Posterior vena cava (tissue), 2 donors: ENCODE measurements at regions of chr2 and their contacts with region 1.

Region 1: GRCh38 chr2:52594026-52594425 is 1173.6 kb upstream of the CHAC2 start:
- DNase-seq: no peak

Region 2: GRCh38 chr2:52512760-52513159 is 81.3 kb before region 1 on chr2:
- intact Hi-C with region 1: loop called in 1 of 2 experiments (anchors 2 kb)
- DNase-seq: no peak

Region 3: DNA sequence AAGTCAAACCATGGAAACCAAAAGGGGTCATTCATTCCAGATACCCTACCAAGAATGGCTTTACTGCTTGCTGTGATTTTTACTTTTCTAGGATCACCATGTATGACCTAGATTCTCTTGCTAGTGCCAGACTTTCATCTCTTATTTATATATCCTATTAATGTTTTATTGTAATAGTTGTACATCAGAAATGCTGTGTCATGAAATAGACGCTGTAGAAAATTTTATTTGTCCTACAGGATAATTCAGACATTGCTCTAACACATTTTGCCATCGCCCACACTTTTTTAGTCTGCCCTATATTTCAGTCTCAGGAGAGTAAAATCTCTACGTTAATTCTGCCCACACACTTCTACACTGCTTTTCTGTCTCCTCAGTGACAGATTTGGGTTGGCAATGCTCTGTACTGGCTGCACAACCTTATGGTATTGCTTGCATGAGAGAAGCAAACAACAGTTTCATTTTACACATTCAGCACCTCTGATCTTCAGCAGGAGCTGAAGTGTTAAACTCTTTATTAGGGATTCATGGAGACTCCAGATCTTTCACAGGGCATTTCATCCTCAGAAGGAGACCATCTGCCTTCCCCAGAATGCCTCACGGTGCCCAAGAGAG is 301.8 kb after region 1 on chr2:
- intact Hi-C with region 1: no loop called
- DNase-seq: no peak